OCI-LY7 (cell line): ENCODE measurements at regions of chr4 and their contacts with region 1.

Region 1: DNA sequence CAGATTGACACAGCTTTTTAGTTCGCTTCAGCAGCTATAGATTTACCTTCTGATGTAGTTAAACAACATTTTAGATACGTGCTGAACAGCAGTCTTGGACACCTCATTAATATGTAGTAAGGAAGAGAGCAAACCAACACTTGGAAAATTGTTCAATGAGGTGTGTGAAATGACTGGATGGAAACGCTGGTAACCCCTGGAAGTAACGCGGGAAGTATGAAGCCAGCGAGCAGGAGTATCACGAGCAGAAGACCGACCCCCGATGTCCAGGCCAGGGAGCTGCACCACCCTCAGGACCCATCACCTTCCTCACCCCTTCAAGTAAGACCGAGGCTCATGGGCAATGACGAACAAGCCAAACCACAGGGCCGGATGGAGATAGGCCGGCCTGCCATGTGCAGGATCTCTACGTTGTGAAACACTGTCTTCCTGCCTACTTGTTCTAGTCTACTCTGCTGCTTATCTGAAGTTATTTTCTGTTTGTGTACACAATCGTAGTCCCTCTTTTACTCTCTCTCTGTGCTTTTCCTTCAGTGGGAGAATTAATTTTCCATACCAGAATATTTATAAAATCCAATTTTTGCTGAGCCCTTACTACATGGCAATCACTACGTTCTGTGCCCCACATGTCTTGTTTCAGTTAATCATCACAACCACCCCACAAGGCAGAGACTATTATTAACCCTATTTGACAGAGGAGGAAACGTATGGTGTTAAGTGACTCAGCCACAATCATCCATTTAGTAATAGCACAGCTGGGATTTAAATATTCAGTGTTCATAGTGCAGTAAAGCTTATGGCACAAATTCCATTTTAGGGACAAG is 221.7 kb downstream of the APBB2 start:
- DNase-seq: peak; percentile 90
- H3K4me3 ChIP-seq: peak overlapping the region; percentile 28
- H3K27ac ChIP-seq: peak overlapping the region; percentile 100
- H3K4me1 ChIP-seq: peaks cover 89% of the 10 kb centered on the region
- CTCF ChIP-seq: no peak

Region 2: DNA sequence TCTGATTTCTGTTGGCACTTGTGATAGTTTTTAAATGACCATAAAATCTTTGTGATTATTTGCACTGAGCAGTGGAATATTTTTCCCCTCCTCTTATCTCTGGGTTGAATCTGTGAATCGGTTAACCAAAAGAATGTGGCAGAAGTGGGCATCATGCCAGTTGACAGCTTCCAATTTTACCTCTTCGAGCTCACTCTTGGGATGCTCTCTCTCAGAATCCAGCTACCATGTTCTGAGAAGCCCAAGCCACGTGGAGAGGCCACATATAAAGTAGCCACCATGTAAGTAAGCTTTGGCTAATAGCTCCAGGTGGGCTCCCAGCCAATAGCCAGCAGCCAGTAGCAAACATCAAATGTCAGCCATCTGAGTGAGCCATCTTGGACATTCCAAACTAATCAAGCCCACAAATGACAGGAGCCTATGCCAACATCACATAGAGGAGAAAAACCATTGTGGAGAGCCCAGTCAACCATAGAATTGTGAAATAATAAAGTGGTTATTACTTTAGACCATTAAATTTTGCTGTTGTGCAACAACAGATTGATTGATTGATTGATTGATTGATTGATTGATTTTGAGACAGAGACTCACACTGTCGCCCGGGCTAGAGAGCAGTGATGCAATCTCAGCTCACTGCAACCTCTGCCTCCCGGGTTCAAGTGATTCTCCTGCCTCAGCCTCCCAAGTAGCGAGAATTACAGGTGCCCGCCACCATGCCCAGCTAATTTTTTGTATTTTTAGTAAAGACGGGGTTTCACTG is 1823.1 kb before region 1 on chr4:
- CTCF ChIA-PET with region 1: no interaction called
- POLR2A ChIA-PET with region 1: no interaction called
- intact Hi-C with region 1: loop called (anchors 10 kb)
- DNase-seq: no peak
- H3K4me3 ChIP-seq: no peak overlapping the region
- H3K27ac ChIP-seq: no peak overlapping the region
- H3K4me1 ChIP-seq: peaks cover 50% of the 10 kb centered on the region
- CTCF ChIP-seq: no peak

Region 3: DNA sequence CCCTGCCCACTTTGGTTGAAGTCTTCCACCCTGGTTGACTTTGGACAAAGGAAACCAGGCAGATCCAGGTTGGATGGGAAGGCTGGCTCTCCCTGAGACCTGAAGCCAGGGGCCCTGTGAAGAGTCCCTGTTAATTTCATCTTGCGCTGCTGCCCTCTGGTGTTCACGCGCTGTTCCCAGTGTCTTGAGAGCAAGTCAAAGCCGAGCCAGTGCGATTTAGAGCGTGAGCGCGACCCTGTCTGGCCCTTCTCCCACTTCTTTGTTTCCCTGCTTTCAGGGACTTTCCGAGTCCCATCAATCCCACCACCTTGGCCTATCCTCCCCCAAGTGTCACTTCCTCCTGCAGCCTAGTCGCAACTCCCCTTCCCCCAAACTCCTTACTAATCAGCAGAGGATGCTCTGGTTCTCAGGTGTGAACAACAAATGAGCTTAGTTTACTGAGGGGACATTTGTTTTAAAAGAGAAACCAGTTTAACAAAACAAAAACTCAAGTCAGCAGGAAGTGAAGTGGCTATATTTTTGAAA is 683.4 kb before region 1 on chr4:
- CTCF ChIA-PET with region 1: no interaction called
- POLR2A ChIA-PET with region 1: no interaction called
- intact Hi-C with region 1: loop called (anchors 10 kb)
- DNase-seq: peak; percentile 90
- H3K4me3 ChIP-seq: peak overlapping the region; percentile 58
- H3K27ac ChIP-seq: peak overlapping the region; percentile 90
- H3K4me1 ChIP-seq: peaks cover 55% of the 10 kb centered on the region
- CTCF ChIP-seq: peak; percentile 96

Region 4: GRCh38 chr4:40656201-40656901 is 336.3 kb before region 1 on chr4:
- CTCF ChIA-PET with region 1: no interaction called
- POLR2A ChIA-PET with region 1: no interaction called
- intact Hi-C with region 1: loop called (anchors 5 kb)
- DNase-seq: peak; percentile 84
- H3K4me3 ChIP-seq: peak overlapping the region; percentile 31
- H3K27ac ChIP-seq: peak overlapping the region; percentile 75
- H3K4me1 ChIP-seq: peaks cover 33% of the 10 kb centered on the region
- CTCF ChIP-seq: no peak

Region 5: DNA sequence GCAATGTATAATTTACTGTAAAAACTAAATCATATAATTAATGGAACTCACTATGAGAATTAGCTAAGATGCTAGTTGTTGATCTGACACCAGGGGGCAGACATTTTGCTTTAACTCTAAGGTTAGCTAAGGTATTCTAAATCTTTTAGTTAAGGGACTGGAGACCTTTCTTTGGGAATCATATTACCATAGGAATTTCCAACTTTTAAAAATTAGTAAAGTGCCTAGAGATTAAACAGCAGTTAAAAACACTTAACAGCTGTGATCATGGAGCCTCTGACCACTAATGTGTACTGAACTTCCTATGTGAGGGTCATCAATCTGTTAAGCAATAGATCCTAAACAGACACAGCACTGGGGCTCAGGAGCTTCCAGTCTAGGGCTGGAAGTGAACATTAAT is 16.3 kb before region 1 on chr4:
- CTCF ChIA-PET with region 1: interaction called, 4 read pairs
- POLR2A ChIA-PET with region 1: interaction called, 127 read pairs
- intact Hi-C with region 1: loop called (anchors 2 kb)
- DNase-seq: peak; percentile 75
- H3K4me3 ChIP-seq: no peak overlapping the region
- H3K27ac ChIP-seq: no peak overlapping the region
- H3K4me1 ChIP-seq: peaks cover 35% of the 10 kb centered on the region
- CTCF ChIP-seq: peak; percentile 96

Region 6: DNA sequence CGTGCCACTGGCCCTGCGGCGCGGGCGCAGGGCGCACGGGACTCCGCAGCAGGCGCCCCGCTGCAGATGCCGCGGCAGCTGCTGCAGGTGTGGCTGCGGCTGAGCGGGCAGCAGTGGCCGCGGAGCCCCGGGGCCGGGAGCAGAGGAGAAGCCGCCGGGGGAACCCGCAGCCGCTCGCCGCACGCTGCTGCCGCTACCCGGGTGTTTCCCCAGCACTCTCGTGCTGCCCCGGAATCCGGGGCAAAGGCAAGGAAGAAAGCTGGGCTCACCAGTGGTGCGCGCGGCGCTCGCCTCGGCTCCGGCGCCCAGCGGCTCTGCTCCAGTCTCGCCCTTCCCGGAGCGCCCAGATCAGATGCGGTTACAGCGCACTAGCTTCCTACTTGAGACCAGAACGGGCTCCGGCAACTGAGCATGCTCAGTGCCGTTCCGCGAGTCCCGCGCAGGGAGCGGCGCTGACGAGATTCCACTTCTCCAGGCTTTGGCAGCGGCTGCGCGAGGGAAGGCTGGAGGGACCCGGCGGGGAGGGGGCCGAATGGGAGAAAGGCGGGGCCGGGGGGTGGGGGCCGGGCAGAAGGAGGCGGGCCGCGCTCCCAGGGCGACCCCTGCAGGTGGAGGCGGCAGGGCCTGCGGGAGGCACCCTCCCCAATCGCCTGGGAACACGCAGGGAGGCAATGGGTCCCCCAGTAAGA is 221.6 kb after region 1 on chr4 and contains the start of gene APBB2:
- CTCF ChIA-PET with region 1: interaction called, 3 read pairs
- POLR2A ChIA-PET with region 1: interaction called, 19 read pairs
- intact Hi-C with region 1: loop called (anchors 1 kb)
- DNase-seq: peak; percentile 87
- H3K4me3 ChIP-seq: peak within 1 kb of the TSS; percentile 90
- H3K27ac ChIP-seq: peak within 1 kb of the TSS; percentile 69
- H3K4me1 ChIP-seq: peaks cover 40% of the 10 kb centered on the region
- CTCF ChIP-seq: peak; percentile 79
- total RNA-seq, gene APBB2: 47.4 and 66.4 TPM in 2 replicates

Region 7: GRCh38 chr4:41346306-41347061 is 353.8 kb after region 1 on chr4:
- CTCF ChIA-PET with region 1: no interaction called
- POLR2A ChIA-PET with region 1: no interaction called
- intact Hi-C with region 1: no loop called
- DNase-seq: no peak
- H3K4me3 ChIP-seq: no peak overlapping the region
- H3K27ac ChIP-seq: no peak overlapping the region
- H3K4me1 ChIP-seq: no peaks in the 10 kb centered on the region
- CTCF ChIP-seq: no peak

Region 8: GRCh38 chr4:42638993-42639392 is 1646.3 kb after region 1 on chr4:
- CTCF ChIA-PET with region 1: no interaction called
- POLR2A ChIA-PET with region 1: no interaction called
- intact Hi-C with region 1: loop called (anchors 5 kb)
- DNase-seq: peak; percentile 87
- H3K4me3 ChIP-seq: peak overlapping the region; percentile 65
- H3K27ac ChIP-seq: peak overlapping the region; percentile 99
- H3K4me1 ChIP-seq: peaks cover 97% of the 10 kb centered on the region
- CTCF ChIP-seq: no peak